Head of caudate nucleus (tissue), 42 donors: ENCODE measurements at regions of chr14 and their contacts with region 1.

Region 1: DNA sequence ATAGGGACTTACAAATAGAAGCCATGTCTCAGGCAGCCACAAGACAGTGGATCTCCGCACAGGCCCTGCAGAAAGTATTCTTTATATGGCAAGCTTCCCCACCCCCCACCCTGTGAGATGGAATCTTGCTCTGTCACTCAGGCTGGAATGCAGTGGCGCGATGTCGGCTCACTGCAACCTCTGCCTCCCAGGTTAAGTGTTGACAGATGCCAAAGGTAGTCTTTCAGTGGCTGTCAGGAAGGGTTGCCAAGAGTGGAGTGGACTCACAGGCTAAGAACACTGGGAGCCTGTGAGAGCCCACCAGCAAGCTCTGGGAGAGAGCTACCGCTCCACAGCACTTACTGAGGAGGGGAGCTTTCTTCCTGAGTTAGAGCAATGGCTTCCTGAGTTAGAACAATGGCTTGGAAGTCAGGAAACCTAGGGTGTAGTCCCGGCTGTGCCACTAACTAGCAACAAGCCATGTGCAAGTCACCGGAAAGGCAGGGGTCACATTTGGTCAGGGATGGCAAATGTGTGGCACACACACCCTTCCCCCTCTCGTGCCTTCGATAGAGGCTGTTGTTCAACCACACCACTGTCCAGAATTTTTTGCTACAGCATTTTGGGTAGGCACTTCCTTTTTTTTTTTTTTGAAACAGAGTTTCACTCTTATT is 2.6 kb downstream of the RNASE1 start:
- DNase-seq: peak in 26 of 42 donors; percentile 20 to 76 (median 43)

Region 2: DNA sequence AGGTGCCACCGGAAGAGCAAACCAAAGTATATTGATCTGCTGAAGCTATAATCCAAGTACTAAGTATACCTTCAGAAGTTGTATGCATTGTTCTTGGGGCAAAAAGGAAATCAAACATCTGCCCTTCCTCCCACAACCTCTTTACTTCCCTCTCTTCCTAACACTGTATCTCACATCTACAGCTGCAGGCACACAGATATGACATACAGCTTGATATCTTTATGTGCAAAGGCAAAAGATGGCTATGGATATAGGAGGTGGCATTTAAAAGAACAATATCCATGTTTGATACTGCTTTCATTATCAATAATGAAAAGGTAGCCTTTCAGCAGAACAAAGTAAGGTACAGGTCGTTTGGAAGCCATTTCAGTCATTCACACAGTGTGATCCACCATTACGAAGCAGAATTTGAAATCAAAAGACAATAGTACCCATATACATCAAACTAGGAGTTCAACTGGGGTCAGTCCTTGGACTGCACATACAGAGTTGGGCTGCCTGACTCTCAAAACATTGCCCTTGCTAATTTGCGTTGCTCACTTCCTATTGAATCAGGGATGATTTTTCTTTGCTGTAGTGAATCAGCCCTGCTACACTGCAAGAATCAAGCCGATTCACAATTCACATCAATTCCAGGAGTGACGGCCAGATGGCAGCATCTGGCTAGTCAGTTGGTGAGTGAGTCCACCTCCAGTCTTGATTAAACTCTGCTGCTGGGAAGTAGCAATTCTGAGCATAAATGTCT is 102.6 kb before region 1 on chr14:
- intact Hi-C with region 1: loop called (anchors 5 kb)
- DNase-seq: peak; percentile 20 to 90 (median 75)

Region 3: DNA sequence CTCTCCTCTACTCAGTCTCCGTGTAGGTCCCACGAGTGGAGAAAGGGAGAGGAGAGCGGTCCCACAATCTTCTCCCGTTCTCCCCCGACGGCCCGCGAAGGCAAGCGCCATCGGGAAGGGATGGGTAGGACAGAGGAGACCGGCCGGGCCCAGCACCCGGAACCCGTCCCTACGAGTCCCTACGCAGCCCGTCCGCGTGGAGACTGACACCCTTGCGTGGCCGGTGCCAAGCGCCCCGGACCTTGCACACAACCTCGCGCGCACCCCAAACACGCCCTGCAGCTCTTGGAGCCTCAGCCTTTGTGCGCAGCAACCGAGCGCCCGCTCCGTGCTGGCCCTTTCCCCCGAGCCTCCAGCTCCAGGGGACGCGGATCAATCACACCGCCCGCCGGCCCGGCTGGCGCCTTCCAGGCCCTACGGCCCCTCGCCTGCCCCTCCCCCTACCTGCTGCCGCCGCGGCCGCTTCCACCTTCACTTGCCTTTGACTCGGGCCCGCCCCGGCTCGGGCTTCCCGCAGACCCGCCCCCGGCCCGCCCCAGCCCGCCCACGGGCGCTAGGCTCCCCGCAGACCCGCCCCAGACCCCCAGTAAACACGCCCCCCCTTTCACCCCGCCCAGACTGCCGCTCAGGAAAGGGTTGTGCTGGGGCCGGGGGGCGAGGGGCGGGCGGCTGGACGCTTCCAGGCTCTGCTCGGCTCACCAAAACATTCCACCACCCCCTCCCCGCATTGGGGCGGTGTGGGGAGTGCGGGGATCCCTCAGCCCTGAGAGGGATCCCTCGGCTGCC is 224.8 kb after region 1 on chr14 and contains the start of gene NDRG2:
- intact Hi-C with region 1: loop called (anchors 5 kb)
- DNase-seq: peak; percentile 46 to 93 (median 81)